Caco-2 (cell line): ENCODE measurements at regions of chr7 and their contacts with region 1.

Region 1: DNA sequence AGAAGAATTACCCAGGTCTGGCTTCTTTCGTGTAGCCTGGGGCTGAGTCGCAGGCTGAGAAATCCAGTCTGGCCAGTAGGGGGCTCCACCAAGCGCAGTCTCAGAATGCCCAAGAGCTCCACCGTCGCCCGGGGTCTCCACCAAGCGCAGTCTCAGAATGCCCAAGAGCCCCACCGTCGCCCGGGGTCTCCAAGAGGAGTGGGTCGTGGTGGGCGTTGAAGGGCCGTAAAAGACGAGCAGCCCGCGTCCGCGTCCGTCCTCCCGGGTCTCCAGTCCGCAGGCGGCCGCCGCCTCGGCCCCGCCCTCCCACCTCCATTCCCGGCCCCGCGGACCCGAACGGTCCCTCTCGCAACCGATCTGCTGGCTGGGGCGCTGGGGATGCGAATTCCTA is 895 bp upstream of the ZYX start:
- DNase-seq: peak; percentile 84 to 89
- H3K4me3 ChIP-seq: peak overlapping the region; percentile 70
- H3K4me3 Mint-ChIP-seq: peak overlapping the region; percentile 85
- H3K27ac Mint-ChIP-seq: peak overlapping the region; percentile 90
- H3K4me1 ChIP-seq: peaks cover 44% of the 10 kb centered on the region
- H3K4me1 Mint-ChIP-seq: peaks cover 14% of the 10 kb centered on the region
- H3K27me3 ChIP-seq: no peaks in the 10 kb centered on the region
- H3K27me3 Mint-ChIP-seq: no peaks in the 10 kb centered on the region
- CTCF ChIP-seq: peak; percentile 89 to 92

Region 2: DNA sequence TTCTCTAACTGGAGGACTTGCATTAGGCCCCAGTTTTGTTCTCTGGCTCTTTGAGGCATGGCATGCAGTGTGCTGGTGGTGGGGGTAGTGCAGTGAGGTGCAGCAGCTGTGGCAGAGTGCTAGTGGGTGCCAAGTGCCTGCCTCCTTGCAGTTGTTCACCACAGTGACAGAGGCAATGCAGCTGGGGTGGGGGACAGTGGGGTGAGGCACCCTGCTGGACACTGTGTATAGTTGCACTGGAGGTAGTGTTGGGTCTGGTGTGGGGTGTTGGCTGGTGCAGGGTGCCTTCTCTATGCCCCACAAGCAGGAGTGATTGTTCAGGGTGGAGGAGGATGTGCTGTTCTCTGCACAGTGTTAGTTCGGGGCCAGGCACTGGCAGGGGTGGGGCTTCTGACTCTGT is 396.4 kb before region 1 on chr7:
- CTCF ChIA-PET with region 1: no interaction called
- POLR2A ChIA-PET with region 1: no interaction called
- intact Hi-C with region 1: no loop called
- DNase-seq: no peak
- H3K4me3 ChIP-seq: no peak overlapping the region
- H3K4me3 Mint-ChIP-seq: no peak overlapping the region
- H3K27ac Mint-ChIP-seq: no peak overlapping the region
- H3K4me1 ChIP-seq: no peaks in the 10 kb centered on the region
- H3K4me1 Mint-ChIP-seq: no peaks in the 10 kb centered on the region
- H3K27me3 ChIP-seq: no peaks in the 10 kb centered on the region
- H3K27me3 Mint-ChIP-seq: peaks cover 11% of the 10 kb centered on the region
- CTCF ChIP-seq: no peak

Region 3: DNA sequence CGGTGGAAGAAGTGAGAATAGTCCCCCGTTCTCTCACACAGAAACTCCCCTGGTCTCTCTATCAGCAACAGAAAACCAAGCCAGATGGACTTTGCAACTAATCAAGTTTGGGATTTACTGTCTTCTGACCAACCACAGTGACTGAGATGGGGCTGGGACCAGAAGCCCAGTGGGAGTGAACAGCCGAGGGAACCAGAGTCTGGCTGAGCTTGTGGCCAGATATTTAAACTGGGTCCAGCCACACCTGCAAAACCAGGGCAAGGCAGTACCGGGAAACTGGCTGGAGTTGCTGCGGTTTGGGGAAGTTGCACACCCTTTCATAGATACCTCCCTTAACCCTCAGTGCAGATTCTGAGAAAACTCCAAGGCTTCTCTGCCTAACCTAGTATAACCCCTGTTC is 111.0 kb before region 1 on chr7:
- CTCF ChIA-PET with region 1: no interaction called
- POLR2A ChIA-PET with region 1: no interaction called
- intact Hi-C with region 1: no loop called
- DNase-seq: no peak
- H3K4me3 ChIP-seq: no peak overlapping the region
- H3K4me3 Mint-ChIP-seq: no peak overlapping the region
- H3K27ac Mint-ChIP-seq: no peak overlapping the region
- H3K4me1 ChIP-seq: peaks cover 5% of the 10 kb centered on the region; the same call in 1 of the 2 replicates
- H3K4me1 Mint-ChIP-seq: peaks cover 13% of the 10 kb centered on the region
- H3K27me3 ChIP-seq: no peaks in the 10 kb centered on the region
- H3K27me3 Mint-ChIP-seq: no peaks in the 10 kb centered on the region
- CTCF ChIP-seq: no peak

Region 4: DNA sequence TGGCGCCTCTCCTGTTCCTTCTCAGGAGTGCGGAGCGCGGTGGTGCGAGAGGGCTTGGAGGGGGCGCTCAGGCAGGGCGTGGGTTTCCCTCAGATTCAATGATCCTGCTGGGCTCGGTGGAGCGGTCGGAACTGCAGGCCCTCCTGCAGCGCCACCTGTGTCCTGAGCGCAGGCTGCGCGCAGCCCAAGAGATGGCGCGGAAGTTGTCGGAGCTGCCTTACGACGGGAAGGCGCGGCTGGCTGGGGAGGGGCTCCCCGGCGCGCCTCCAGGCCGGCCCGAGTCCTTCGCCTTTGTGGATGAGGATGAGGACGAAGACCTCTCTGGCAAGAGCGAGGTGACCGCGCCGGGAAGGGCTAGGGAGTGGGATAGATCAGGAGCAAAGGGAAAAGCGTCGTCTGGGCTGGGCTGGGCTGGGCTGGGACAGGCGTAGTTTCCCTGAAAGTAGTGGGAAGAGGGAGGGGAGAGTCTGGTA is 34.8 kb before region 1 on chr7:
- CTCF ChIA-PET with region 1: interaction called, 3 read pairs
- POLR2A ChIA-PET with region 1: no interaction called
- intact Hi-C with region 1: loop called (anchors 1 kb)
- DNase-seq: peak; percentile 85 to 86
- H3K4me3 ChIP-seq: peak overlapping the region; percentile 36
- H3K4me3 Mint-ChIP-seq: peak overlapping the region; percentile 78
- H3K27ac Mint-ChIP-seq: peak overlapping the region; percentile 40
- H3K4me1 ChIP-seq: no peaks in the 10 kb centered on the region
- H3K4me1 Mint-ChIP-seq: peaks cover 6% of the 10 kb centered on the region
- H3K27me3 ChIP-seq: no peaks in the 10 kb centered on the region
- H3K27me3 Mint-ChIP-seq: no peaks in the 10 kb centered on the region
- CTCF ChIP-seq: peak; percentile 58 to 86

Region 5: DNA sequence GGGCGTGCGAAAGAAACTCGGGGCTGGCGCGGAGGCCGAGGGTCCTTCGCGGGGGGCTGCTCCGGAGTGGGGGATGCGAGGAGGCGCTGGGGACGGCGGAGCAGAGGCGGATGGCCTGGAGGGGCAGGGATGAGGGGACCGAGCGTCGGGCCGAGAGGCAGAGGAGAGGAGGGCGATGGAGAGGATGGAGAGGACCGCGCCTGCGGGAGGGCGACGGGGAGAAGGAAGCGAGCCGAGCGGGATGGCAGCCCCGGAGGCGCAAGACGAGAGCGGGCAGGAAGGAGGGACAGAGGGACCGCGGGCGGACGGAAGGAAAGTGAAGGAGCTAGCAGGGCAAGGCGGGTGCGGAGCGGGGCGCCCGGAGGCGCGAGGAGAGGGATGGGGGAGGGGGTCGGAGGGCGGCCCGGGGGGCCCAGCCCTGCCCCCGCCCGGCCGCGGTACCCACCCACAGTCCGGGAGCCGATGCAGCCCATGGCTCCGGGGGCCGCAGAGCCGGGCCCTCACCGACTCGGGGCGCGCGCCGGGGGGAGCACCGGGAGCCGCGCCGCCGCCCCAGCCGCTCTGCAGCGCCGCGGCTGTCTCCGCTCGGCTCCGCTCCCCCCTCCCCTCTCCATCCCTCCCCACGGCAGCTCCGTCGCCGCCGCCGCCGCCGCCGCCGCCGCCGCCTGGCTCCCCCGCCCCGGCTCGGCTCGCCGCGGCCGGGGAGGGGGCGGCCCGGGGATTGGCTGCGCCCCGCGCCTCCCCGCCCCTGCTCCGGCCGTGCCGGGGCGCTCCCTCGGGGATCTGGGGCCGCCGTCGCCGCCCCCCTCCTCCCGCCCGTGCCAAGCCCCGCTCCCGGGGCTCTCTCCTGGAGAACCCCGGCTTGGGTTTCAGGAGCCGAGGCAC is 17.9 kb before region 1 on chr7 and contains the start of gene FAM131B:
- CTCF ChIA-PET with region 1: interaction called, 4 read pairs
- POLR2A ChIA-PET with region 1: no interaction called
- intact Hi-C with region 1: loop called (anchors 2 kb)
- DNase-seq: peak; percentile 36 to 52
- H3K4me3 ChIP-seq: peak within 1 kb of the TSS; percentile 52
- H3K4me3 Mint-ChIP-seq: peak within 1 kb of the TSS; percentile 94
- H3K27ac Mint-ChIP-seq: peak within 1 kb of the TSS; percentile 55
- H3K4me1 ChIP-seq: peaks cover 4% of the 10 kb centered on the region; the same call in 1 of the 2 replicates
- H3K4me1 Mint-ChIP-seq: peaks cover 23% of the 10 kb centered on the region
- H3K27me3 ChIP-seq: no peaks in the 10 kb centered on the region
- H3K27me3 Mint-ChIP-seq: peaks cover 3% of the 10 kb centered on the region
- CTCF ChIP-seq: no peak
- total RNA-seq, gene FAM131B: 20.2 and 22.3 TPM in 2 replicates

Region 6: DNA sequence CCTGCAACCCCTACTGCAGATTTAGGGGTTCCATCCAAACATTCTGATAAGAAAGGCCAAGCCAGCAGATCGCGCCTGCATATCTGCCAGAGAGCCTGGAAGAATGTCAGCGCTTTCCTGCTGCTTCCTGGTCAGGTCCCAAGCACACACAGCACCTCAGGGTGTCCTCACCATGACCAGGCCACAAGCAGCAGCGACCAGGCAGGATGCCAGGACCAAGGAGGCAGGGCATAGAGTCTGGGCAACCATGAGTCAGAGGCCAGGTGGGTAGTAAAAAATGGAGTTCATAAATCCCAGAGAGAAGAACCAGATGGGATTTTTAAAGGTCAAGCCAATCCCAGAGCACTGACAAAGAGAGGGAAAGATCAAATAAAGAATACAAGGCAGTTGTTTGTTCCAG is 12.3 kb before region 1 on chr7:
- CTCF ChIA-PET with region 1: interaction called, 23 read pairs
- POLR2A ChIA-PET with region 1: interaction called, 24 read pairs
- intact Hi-C with region 1: loop called (anchors 1 kb)
- DNase-seq: peak in 1 of 2 experiments; percentile 32
- H3K4me3 ChIP-seq: no peak overlapping the region
- H3K4me3 Mint-ChIP-seq: no peak overlapping the region
- H3K27ac Mint-ChIP-seq: peak overlapping the region; percentile 96
- H3K4me1 ChIP-seq: peaks cover 49% of the 10 kb centered on the region
- H3K4me1 Mint-ChIP-seq: peaks cover 54% of the 10 kb centered on the region
- H3K27me3 ChIP-seq: no peaks in the 10 kb centered on the region
- H3K27me3 Mint-ChIP-seq: no peaks in the 10 kb centered on the region
- CTCF ChIP-seq: no peak

Region 7: GRCh38 chr7:143408686-143409561 is 28.7 kb after region 1 on chr7 and contains the start of gene EPHA1:
- CTCF ChIA-PET with region 1: interaction called, 14 read pairs
- POLR2A ChIA-PET with region 1: interaction called, 3 read pairs
- intact Hi-C with region 1: loop called (anchors 1 kb)
- DNase-seq: peak; percentile 86 to 88
- H3K4me3 ChIP-seq: peak within 1 kb of the TSS; percentile 59
- H3K4me3 Mint-ChIP-seq: peak within 1 kb of the TSS; percentile 86
- H3K27ac Mint-ChIP-seq: peak within 1 kb of the TSS; percentile 86
- H3K4me1 ChIP-seq: peaks cover 49% of the 10 kb centered on the region
- H3K4me1 Mint-ChIP-seq: peaks cover 68% of the 10 kb centered on the region
- H3K27me3 ChIP-seq: no peaks in the 10 kb centered on the region
- H3K27me3 Mint-ChIP-seq: no peaks in the 10 kb centered on the region
- CTCF ChIP-seq: peak; percentile 68 to 87
- total RNA-seq, gene EPHA1: 66.6 and 69.2 TPM in 2 replicates

Region 8: GRCh38 chr7:143416565-143417149 is 36.4 kb after region 1 on chr7:
- CTCF ChIA-PET with region 1: interaction called, 6 read pairs
- POLR2A ChIA-PET with region 1: no interaction called
- intact Hi-C with region 1: loop called (anchors 1 kb)
- DNase-seq: peak in 1 of 2 experiments; percentile 66
- H3K4me3 ChIP-seq: no peak overlapping the region
- H3K4me3 Mint-ChIP-seq: no peak overlapping the region
- H3K27ac Mint-ChIP-seq: no peak overlapping the region
- H3K4me1 ChIP-seq: peaks cover 17% of the 10 kb centered on the region
- H3K4me1 Mint-ChIP-seq: peaks cover 35% of the 10 kb centered on the region
- H3K27me3 ChIP-seq: no peaks in the 10 kb centered on the region
- H3K27me3 Mint-ChIP-seq: no peaks in the 10 kb centered on the region
- CTCF ChIP-seq: peak; percentile 70 to 75

Region 9: DNA sequence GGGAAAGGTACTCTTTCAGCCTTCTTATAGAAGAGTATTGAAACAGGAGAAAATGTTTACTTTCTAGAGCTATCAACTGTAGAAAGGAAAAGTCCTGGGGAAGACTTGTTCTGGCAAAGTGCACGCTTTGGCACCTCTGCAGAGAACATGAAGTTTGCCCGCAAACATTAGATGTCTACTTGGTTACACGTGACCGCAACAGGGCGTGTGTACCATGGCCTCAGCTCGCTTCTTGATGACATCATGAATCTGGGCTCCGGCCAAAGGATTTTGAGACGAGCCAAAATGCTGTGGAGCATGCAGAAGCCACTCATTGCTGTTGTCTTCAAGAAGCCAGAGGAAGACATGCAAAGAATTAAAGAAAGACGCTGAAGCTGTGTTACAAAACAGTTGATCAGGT is 54.4 kb after region 1 on chr7:
- CTCF ChIA-PET with region 1: no interaction called
- POLR2A ChIA-PET with region 1: no interaction called
- intact Hi-C with region 1: no loop called
- DNase-seq: no peak
- H3K4me3 ChIP-seq: no peak overlapping the region
- H3K4me3 Mint-ChIP-seq: no peak overlapping the region
- H3K27ac Mint-ChIP-seq: no peak overlapping the region
- H3K4me1 ChIP-seq: no peaks in the 10 kb centered on the region
- H3K4me1 Mint-ChIP-seq: no peaks in the 10 kb centered on the region
- H3K27me3 ChIP-seq: no peaks in the 10 kb centered on the region
- H3K27me3 Mint-ChIP-seq: no peaks in the 10 kb centered on the region
- CTCF ChIP-seq: no peak